ENCODE measurements at regions of chr5 and their contacts with region 1.

Region 1: GRCh38 chr5:112551419-112552032 is 132.4 kb upstream of the EPB41L4A start:
- DNase-seq: no peak
- ATAC-seq: peak; percentile 83
- H3K4me3 ChIP-seq: no peak overlapping the region
- H3K27ac ChIP-seq: no peak overlapping the region
- H3K4me1 ChIP-seq: no peaks in the 10 kb centered on the region
- H3K27me3 ChIP-seq: no peaks in the 10 kb centered on the region; a peak in 1 of 4 replicates
- CTCF ChIP-seq: peak; percentile 57 to 79 (median 66)
- EP300 ChIP-seq: no peak
- POLR2A ChIP-seq: no peak
- RAD21 ChIP-seq: peak; percentile 85

Region 2: GRCh38 chr5:112492291-112492690 is 59.2 kb before region 1 on chr5:
- CTCF ChIA-PET with region 1: interaction called, 36 read pairs
- POLR2A ChIA-PET with region 1: no interaction called
- RAD21 ChIA-PET with region 1: interaction called, 11 read pairs
- SMC1A ChIA-PET with region 1: interaction called, 20 read pairs
- in situ Hi-C with region 1: no loop called
- intact Hi-C with region 1: no loop called
- DNase-seq: peak; percentile 12
- ATAC-seq: peak; percentile 100
- H3K4me3 ChIP-seq: no peak overlapping the region
- H3K27ac ChIP-seq: no peak overlapping the region
- H3K4me1 ChIP-seq: no peaks in the 10 kb centered on the region
- H3K27me3 ChIP-seq: no peaks in the 10 kb centered on the region; a peak in 1 of 4 replicates
- CTCF ChIP-seq: peak; percentile 79 to 86 (median 85)
- EP300 ChIP-seq: no peak
- POLR2A ChIP-seq: no peak
- RAD21 ChIP-seq: peak; percentile 69

Region 3: GRCh38 chr5:112529525-112529924 is 22.0 kb before region 1 on chr5:
- CTCF ChIA-PET with region 1: interaction called, 30 read pairs
- POLR2A ChIA-PET with region 1: no interaction called
- RAD21 ChIA-PET with region 1: interaction called, 9 read pairs
- SMC1A ChIA-PET with region 1: interaction called, 12 read pairs
- in situ Hi-C with region 1: no loop called
- intact Hi-C with region 1: no loop called
- DNase-seq: no peak
- ATAC-seq: peak; percentile 71
- H3K4me3 ChIP-seq: no peak overlapping the region
- H3K27ac ChIP-seq: no peak overlapping the region
- H3K4me1 ChIP-seq: peaks cover 26% of the 10 kb centered on the region
- H3K27me3 ChIP-seq: no peaks in the 10 kb centered on the region
- CTCF ChIP-seq: peak; percentile 57 to 61 (median 58); a peak in 5 of 6 replicates
- EP300 ChIP-seq: no peak
- POLR2A ChIP-seq: no peak
- RAD21 ChIP-seq: peak; percentile 65

Region 4: GRCh38 chr5:112604732-112605630 is 53.5 kb after region 1 on chr5:
- CTCF ChIA-PET with region 1: interaction called, 112 read pairs
- POLR2A ChIA-PET with region 1: no interaction called
- RAD21 ChIA-PET with region 1: interaction called, 25 read pairs
- SMC1A ChIA-PET with region 1: interaction called, 67 read pairs
- in situ Hi-C with region 1: no loop called
- intact Hi-C with region 1: loop called (anchors 1 kb)
- DNase-seq: peak; percentile 13
- ATAC-seq: peak; percentile 97
- H3K4me3 ChIP-seq: no peak overlapping the region
- H3K27ac ChIP-seq: no peak overlapping the region
- H3K4me1 ChIP-seq: no peaks in the 10 kb centered on the region
- H3K27me3 ChIP-seq: no peaks in the 10 kb centered on the region; a peak in 1 of 4 replicates
- CTCF ChIP-seq: peak; percentile 44 to 65 (median 60); a peak in 5 of 6 replicates
- EP300 ChIP-seq: no peak
- POLR2A ChIP-seq: no peak
- RAD21 ChIP-seq: peak; percentile 44

Region 5: DNA sequence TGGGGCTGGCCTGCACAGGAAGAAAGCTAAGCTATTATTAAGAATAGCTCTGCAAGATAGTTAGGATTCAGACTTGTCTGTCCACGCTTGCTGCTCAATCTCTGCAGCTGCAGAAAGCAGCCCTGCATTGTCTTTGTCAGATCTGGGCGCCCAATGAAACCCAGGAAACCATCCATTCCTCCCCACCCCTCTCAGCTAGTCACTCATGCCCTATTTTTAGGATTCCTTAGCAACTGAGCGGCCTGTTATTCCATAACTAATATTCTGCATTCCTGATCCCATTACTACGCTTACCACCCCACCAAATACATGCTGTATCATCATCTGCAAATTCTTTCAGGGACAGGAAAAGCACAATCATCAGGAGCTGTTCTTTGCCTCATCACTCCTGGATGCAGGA is 133.2 kb after region 1 on chr5:
- CTCF ChIA-PET with region 1: interaction called, 5 read pairs
- POLR2A ChIA-PET with region 1: no interaction called
- RAD21 ChIA-PET with region 1: interaction called, 6 read pairs
- SMC1A ChIA-PET with region 1: interaction called, 4 read pairs
- in situ Hi-C with region 1: no loop called
- intact Hi-C with region 1: loop called (anchors 5 kb)
- DNase-seq: no peak
- ATAC-seq: no peak; the same call in 2 of the 3 replicates
- H3K4me3 ChIP-seq: no peak overlapping the region
- H3K27ac ChIP-seq: no peak overlapping the region
- H3K4me1 ChIP-seq: peaks cover 10% of the 10 kb centered on the region
- H3K27me3 ChIP-seq: peaks cover 0 to 2% of the 10 kb centered on the region in 2 experiments; a peak in 1 of 4 replicates
- CTCF ChIP-seq: no peak
- EP300 ChIP-seq: no peak
- POLR2A ChIP-seq: no peak
- RAD21 ChIP-seq: no peak

Region 6: GRCh38 chr5:112848116-112848811 is 296.7 kb after region 1 on chr5:
- CTCF ChIA-PET with region 1: interaction called, 16 read pairs
- POLR2A ChIA-PET with region 1: no interaction called
- RAD21 ChIA-PET with region 1: interaction called, 8 read pairs
- SMC1A ChIA-PET with region 1: interaction called, 9 read pairs
- in situ Hi-C with region 1: no loop called
- intact Hi-C with region 1: loop called (anchors 2 kb)
- DNase-seq: peak; percentile 51
- ATAC-seq: peak; percentile 100
- H3K4me3 ChIP-seq: no peak overlapping the region
- H3K27ac ChIP-seq: no peak overlapping the region
- H3K4me1 ChIP-seq: no peaks in the 10 kb centered on the region
- H3K27me3 ChIP-seq: no peaks in the 10 kb centered on the region
- CTCF ChIP-seq: peak; percentile 61 to 62 (median 61)
- EP300 ChIP-seq: no peak
- POLR2A ChIP-seq: no peak
- RAD21 ChIP-seq: peak; percentile 37; the same call in 1 of the 2 replicates

Region 7: GRCh38 chr5:113606298-113607134 is 1055.0 kb after region 1 on chr5:
- CTCF ChIA-PET with region 1: interaction called, 4 read pairs
- POLR2A ChIA-PET with region 1: no interaction called
- RAD21 ChIA-PET with region 1: interaction called, 6 read pairs
- SMC1A ChIA-PET with region 1: interaction called, 3 read pairs
- in situ Hi-C with region 1: loop called (anchors 10 kb)
- intact Hi-C with region 1: loop called (anchors 10 kb)
- DNase-seq: peak; percentile 7
- ATAC-seq: peak; percentile 98
- H3K4me3 ChIP-seq: no peak overlapping the region
- H3K27ac ChIP-seq: no peak overlapping the region
- H3K4me1 ChIP-seq: no peaks in the 10 kb centered on the region
- H3K27me3 ChIP-seq: no peaks in the 10 kb centered on the region
- CTCF ChIP-seq: peak; percentile 63 to 82 (median 73)
- EP300 ChIP-seq: no peak
- POLR2A ChIP-seq: no peak
- RAD21 ChIP-seq: peak; percentile 96

Measured in GM12878 (cell line).